ENCODE measurements at regions of chrX and their contacts with region 1.

Region 1: DNA sequence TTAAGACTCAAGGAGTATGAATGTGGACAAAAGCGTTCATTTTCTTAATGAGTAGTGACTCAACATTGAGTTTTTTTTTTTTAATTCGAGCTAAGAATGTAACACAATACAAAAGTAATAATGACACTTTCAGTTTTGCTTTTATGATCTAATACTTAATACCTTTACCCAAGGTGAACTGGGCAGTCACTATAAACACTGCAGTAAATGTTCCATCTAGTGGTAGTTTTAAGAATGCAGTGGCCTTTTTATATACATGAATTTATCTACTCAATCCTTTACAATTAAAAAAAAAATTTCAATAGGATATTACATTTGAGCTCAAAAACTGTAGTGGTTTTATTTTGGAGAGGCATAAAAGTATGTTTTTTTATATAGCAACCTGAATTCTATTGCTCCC is 33.9 kb downstream of the PDK3 start:
- DNase-seq: peak; percentile 24 to 25
- ATAC-seq: peak; percentile 61 to 76; a peak in 3 of 6 replicates
- H3K4me3 ChIP-seq: no peak overlapping the region
- H3K27ac ChIP-seq: no peak overlapping the region
- H3K4me1 ChIP-seq: peaks cover 12% of the 10 kb centered on the region
- CTCF ChIP-seq: peak; percentile 56
- EP300 ChIP-seq: no peak
- POLR2A ChIP-seq: no peak
- RAD21 ChIP-seq: peak; percentile 60 to 62

Region 2: GRCh38 chrX:24371391-24371972 is 127.5 kb before region 1 on chrX:
- CTCF ChIA-PET with region 1: interaction called, 36 read pairs
- POLR2A ChIA-PET with region 1: no interaction called
- DNase-seq: peak; percentile 37 to 69
- ATAC-seq: peak; percentile 94 to 98
- H3K4me3 ChIP-seq: no peak overlapping the region
- H3K27ac ChIP-seq: no peak overlapping the region
- H3K4me1 ChIP-seq: no peaks in the 10 kb centered on the region
- CTCF ChIP-seq: peak; percentile 58
- EP300 ChIP-seq: no peak
- POLR2A ChIP-seq: no peak
- RAD21 ChIP-seq: peak; percentile 65 to 69

Region 3: DNA sequence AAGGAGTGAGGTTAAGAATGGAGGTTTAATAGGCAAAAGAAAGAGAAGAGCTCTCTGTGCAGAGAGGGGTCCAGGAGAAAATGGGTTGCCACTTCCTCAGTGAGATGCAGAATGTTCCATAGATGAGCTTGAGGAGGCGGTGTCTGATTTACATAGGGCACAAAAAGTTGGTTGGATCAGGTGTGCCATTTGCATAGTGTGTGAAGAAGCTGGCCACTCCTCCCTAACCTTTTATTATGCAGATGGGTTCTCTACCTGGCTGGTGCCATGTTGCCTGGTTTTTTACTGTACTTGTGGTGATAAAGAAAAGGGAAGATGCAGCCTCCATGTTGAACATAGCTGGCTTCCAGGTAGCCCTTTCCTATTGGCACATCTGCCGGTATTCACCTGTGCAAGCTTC is 111.3 kb before region 1 on chrX:
- CTCF ChIA-PET with region 1: interaction called, 226 read pairs
- POLR2A ChIA-PET with region 1: no interaction called
- DNase-seq: no peak
- ATAC-seq: no peak
- H3K4me3 ChIP-seq: no peak overlapping the region
- H3K27ac ChIP-seq: no peak overlapping the region
- H3K4me1 ChIP-seq: no peaks in the 10 kb centered on the region
- CTCF ChIP-seq: no peak
- EP300 ChIP-seq: no peak
- POLR2A ChIP-seq: no peak
- RAD21 ChIP-seq: no peak

Region 4: DNA sequence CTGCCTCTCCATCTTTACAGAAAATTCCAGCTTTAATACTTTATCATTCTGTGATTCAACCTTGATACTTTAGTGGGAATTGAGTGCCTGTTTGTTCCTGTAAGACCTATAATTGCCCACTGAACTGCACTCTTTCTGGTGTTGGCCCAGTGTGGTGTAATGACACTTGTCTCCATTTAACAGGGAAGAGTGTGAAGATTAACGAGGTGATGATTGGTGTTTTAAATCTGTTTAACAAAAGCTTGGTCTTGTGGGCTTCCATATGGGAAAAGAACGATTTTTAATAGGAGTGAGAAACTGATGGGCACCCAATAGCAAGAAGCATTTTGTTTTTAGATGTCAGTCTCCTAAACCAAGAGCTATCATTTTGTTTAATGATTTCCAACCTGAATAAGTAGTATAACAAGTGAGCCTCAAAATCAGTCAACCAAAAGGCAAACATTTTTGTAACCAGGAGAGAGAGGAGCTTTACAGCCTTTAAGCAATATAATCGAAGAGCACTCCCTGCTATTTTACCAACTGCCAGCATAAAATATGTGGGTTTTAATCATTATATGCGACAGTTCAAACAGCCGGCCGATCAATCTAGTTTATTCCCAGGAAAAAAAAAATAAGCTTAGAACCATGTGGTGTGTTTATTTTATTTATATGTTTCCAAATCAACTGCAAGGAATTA is 88.3 kb before region 1 on chrX:
- CTCF ChIA-PET with region 1: interaction called, 23 read pairs
- POLR2A ChIA-PET with region 1: no interaction called
- DNase-seq: no peak
- ATAC-seq: no peak
- H3K4me3 ChIP-seq: no peak overlapping the region
- H3K27ac ChIP-seq: no peak overlapping the region
- H3K4me1 ChIP-seq: no peaks in the 10 kb centered on the region
- CTCF ChIP-seq: no peak
- EP300 ChIP-seq: no peak
- POLR2A ChIP-seq: no peak
- RAD21 ChIP-seq: no peak

Region 5: GRCh38 chrX:24485976-24486680 is 12.8 kb before region 1 on chrX:
- CTCF ChIA-PET with region 1: interaction called, 15 read pairs
- POLR2A ChIA-PET with region 1: no interaction called
- DNase-seq: peak; percentile 19 to 26
- ATAC-seq: peak; percentile 86 to 88
- H3K4me3 ChIP-seq: no peak overlapping the region
- H3K27ac ChIP-seq: peak overlapping the region in 1 of 2 experiments; percentile 62; a peak in 3 of 6 replicates
- H3K4me1 ChIP-seq: peaks cover 14% of the 10 kb centered on the region
- CTCF ChIP-seq: no peak
- EP300 ChIP-seq: no peak
- POLR2A ChIP-seq: no peak
- RAD21 ChIP-seq: no peak

Measured in A549 (cell line).